ENCODE measurements at regions of chr11 and their contacts with region 1.

Region 1: DNA sequence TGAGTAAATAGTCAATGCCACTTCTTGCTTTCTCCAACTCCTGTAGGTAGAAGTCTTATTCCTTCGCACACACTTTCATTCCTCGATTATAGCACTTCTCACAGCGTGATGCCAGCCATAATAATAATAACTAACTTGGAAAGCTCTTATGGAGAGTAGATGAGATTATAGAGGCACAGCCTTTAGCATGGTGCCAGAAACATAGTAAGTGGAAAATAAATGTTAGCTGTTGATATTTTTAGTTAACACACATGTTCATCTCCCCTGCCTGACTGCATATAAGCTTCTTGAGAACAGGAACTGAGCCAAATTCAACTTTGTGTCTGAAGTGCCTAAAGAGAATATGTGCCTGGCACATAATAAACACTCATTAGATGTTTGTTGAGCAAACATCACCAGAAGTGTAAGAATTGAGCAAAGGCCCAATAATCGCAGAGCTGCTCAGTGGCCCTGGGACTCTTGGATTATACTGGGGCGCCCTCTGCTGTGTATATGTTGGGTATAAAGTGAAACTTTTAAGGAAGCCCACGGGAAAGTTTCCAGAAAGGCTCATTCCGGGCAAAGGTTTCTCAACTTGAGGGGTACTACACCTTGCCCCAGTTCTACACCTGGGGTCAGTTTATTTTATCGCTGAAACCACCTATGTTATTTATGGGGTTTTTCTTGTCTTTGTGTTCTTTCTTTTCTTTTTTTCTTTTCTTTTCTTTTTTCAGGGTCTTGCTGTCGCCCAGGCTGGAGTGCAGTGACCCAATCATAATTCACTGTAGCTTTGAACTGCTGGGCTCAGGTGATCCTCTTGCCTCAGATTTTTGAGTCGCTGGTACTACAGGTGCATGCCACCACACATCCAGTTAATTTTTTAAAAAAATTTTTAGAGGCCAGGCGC is 22.3 kb downstream of the SLN start:
- DNase-seq: peak; percentile 90
- H3K4me3 ChIP-seq: no peak overlapping the region
- H3K27ac ChIP-seq: no peak overlapping the region
- H3K4me1 ChIP-seq: no peaks in the 10 kb centered on the region
- H3K27me3 ChIP-seq: no peaks in the 10 kb centered on the region
- CTCF ChIP-seq: peak; percentile 37 to 62 (median 44)
- POLR2A ChIP-seq: no peak

Region 2: GRCh38 chr11:107017433-107018227 is 671.9 kb before region 1 on chr11:
- intact Hi-C with region 1: no loop called
- DNase-seq: peak; percentile 74
- H3K4me3 ChIP-seq: peak overlapping the region; percentile 64 to 75
- H3K27ac ChIP-seq: peak overlapping the region; percentile 50 to 85
- H3K4me1 ChIP-seq: no peaks in the 10 kb centered on the region
- H3K27me3 ChIP-seq: no peaks in the 10 kb centered on the region
- CTCF ChIP-seq: peak; percentile 18 to 50 (median 37)
- POLR2A ChIP-seq: no peak

Region 3: GRCh38 chr11:107577346-107577711 is 112.2 kb before region 1 on chr11:
- intact Hi-C with region 1: loop called (anchors 5 kb)
- DNase-seq: no peak
- H3K4me3 ChIP-seq: no peak overlapping the region
- H3K27ac ChIP-seq: no peak overlapping the region
- H3K4me1 ChIP-seq: peaks cover 8% of the 10 kb centered on the region
- H3K27me3 ChIP-seq: no peaks in the 10 kb centered on the region
- CTCF ChIP-seq: no peak
- POLR2A ChIP-seq: no peak